Adrenal gland (tissue), 19 donors: ENCODE measurements at regions of chr18 and their contacts with region 1.

Region 1: GRCh38 chr18:61635901-61636528 is 256.8 kb downstream of the RNF152 start:
- DNase-seq: peak; percentile 41 to 78 (median 61)
- H3K4me3 ChIP-seq: no peak overlapping the region
- H3K27ac ChIP-seq: peak overlapping the region in 2 of 5 donors; percentile 30 to 35
- H3K4me1 ChIP-seq: peaks cover 0 to 8% of the 10 kb centered on the region in 2 donors
- H3K27me3 ChIP-seq: no peaks in the 10 kb centered on the region
- CTCF ChIP-seq: peak; percentile 43 to 90 (median 87)
- POLR2A ChIP-seq: no peak

Region 2: DNA sequence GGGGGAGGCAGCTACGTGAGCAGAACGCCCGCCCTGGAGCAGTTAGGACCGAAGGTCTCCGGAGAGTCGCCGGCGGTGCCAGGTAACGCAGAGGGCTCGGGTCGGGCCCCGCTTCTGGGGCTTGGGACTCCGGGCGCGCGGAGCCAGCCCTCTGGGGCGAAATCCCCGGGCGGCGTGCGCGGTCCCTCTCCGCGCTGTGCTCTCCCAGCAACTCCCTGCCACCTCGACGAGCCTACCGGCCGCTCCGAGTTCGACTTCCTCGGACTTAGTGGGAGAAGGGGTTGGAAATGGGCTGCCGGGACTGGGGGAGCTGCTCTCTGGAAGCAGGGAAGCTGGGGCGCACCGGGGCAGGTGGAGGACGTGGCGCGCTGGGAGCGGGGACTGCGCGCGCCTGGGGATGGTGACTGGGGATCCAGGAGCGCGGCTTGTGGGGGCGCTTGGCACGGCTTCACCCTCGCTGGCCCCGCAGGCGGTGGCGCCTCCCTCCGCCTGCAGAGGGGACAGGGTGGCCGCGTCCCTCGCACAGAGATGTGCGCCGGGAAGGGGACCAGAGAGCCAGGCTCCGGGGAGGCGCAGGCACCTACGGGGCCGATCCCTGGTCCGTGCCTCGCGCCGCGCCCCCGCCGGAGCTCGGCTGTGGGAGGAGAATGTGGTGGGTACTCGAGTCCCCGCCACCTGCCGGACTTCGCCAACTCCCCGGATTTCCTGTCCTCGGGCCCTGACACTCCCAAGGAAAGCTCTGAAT is 302.1 kb before region 1 on chr18:
- intact Hi-C with region 1: no loop called
- DNase-seq: peak in 1 of 7 donors; percentile 6
- H3K4me3 ChIP-seq: peak overlapping the region in 1 of 4 donors; percentile 33
- H3K27ac ChIP-seq: no peak overlapping the region
- H3K4me1 ChIP-seq: no peaks in the 10 kb centered on the region
- H3K27me3 ChIP-seq: peaks cover 11% of the 10 kb centered on the region
- CTCF ChIP-seq: no peak
- POLR2A ChIP-seq: no peak

Region 3: GRCh38 chr18:61575419-61575818 is 60.6 kb before region 1 on chr18:
- intact Hi-C with region 1: loop called in 1 of 2 experiments (anchors 10 kb)
- DNase-seq: no peak
- H3K4me3 ChIP-seq: no peak overlapping the region
- H3K27ac ChIP-seq: no peak overlapping the region
- H3K4me1 ChIP-seq: no peaks in the 10 kb centered on the region
- H3K27me3 ChIP-seq: no peaks in the 10 kb centered on the region
- CTCF ChIP-seq: no peak
- POLR2A ChIP-seq: no peak

Region 4: GRCh38 chr18:61893971-61894750 is 258.1 kb after region 1 on chr18:
- intact Hi-C with region 1: loop called (anchors 2 to 5 kb)
- DNase-seq: peak; percentile 80 to 90 (median 82)
- H3K4me3 ChIP-seq: peak overlapping the region in 3 of 4 donors; percentile 56 to 76 (median 69)
- H3K27ac ChIP-seq: peak overlapping the region in 3 of 5 donors; percentile 67 to 90 (median 82)
- H3K4me1 ChIP-seq: peaks cover 21 to 27% of the 10 kb centered on the region in 2 donors
- H3K27me3 ChIP-seq: no peaks in the 10 kb centered on the region
- CTCF ChIP-seq: peak in 4 of 6 experiments; percentile 26 to 61 (median 40)
- POLR2A ChIP-seq: peak; percentile 67 to 69

Region 5: GRCh38 chr18:61901323-61901986 is 265.4 kb after region 1 on chr18:
- intact Hi-C with region 1: loop called (anchors 2 to 5 kb)
- DNase-seq: peak; percentile 35 to 74 (median 55)
- H3K4me3 ChIP-seq: no peak overlapping the region
- H3K27ac ChIP-seq: no peak overlapping the region
- H3K4me1 ChIP-seq: no peaks in the 10 kb centered on the region
- H3K27me3 ChIP-seq: no peaks in the 10 kb centered on the region
- CTCF ChIP-seq: peak; percentile 84 to 93 (median 87)
- POLR2A ChIP-seq: no peak

Region 6: GRCh38 chr18:62131301-62131909 is 495.4 kb after region 1 on chr18:
- intact Hi-C with region 1: loop called in 1 of 2 experiments (anchors 5 kb)
- DNase-seq: peak; percentile 48 to 74 (median 54)
- H3K4me3 ChIP-seq: no peak overlapping the region
- H3K27ac ChIP-seq: no peak overlapping the region
- H3K4me1 ChIP-seq: no peaks in the 10 kb centered on the region
- H3K27me3 ChIP-seq: no peaks in the 10 kb centered on the region
- CTCF ChIP-seq: peak; percentile 72 to 98 (median 92)
- POLR2A ChIP-seq: no peak